Dorsolateral prefrontal cortex (tissue), 120 donors: ENCODE measurements at regions of chr9 and their contacts with region 1.

Region 1: DNA sequence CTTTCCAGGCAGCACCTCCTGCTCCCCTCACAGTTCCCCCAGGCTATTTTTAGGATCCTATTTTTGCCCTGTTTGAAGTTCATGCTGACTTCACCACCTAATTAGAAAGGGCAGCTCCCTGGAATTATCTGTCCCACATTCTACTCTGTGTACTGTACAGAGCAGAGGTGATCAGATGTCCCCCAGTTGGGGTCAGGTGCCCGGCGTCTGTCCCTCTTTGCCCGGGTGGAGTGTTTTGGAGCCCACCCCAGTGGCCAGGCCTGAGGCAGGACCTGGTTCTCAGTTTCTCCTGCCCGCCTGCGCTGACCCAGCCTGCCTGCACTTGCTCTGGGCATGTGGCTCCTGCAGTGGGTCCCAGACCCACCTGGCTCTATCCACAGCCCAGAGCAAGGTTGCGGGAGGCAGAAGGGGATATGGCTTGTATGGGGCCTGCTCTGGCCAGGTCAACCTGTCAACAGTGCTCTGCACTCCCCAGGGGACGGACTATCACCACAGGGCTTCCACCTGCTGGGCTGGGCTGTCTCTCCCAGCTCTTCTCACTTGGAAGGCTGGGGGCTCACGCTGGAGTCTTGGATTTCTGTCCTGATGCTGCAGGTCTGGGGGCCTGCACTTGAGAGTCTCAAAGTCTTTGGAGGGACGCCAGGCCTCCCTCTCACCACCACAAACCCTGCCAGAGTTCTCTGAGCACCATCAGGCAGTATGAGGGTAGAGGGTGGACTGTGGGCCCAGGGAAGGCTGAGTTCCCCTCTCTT is 268.3 kb downstream of the GADD45G start:
- DNase-seq: peak in 5 of 10 donors; percentile 7 to 24 (median 16)
- H3K4me3 ChIP-seq: no peak overlapping the region
- H3K27ac ChIP-seq: no peak overlapping the region
- H3K27me3 ChIP-seq: no peaks in the 10 kb centered on the region
- CTCF ChIP-seq: no peak

Region 2: GRCh38 chr9:89730715-89731114 is 142.4 kb before region 1 on chr9:
- intact Hi-C with region 1: no loop called
- DNase-seq: no peak
- H3K4me3 ChIP-seq: no peak overlapping the region
- H3K27ac ChIP-seq: no peak overlapping the region
- H3K27me3 ChIP-seq: no peaks in the 10 kb centered on the region
- CTCF ChIP-seq: no peak

Region 3: GRCh38 chr9:89825669-89826068 is 47.5 kb before region 1 on chr9:
- intact Hi-C with region 1: loop called in 1 of 2 experiments (anchors 1 kb)
- DNase-seq: no peak
- H3K4me3 ChIP-seq: no peak overlapping the region
- H3K27ac ChIP-seq: no peak overlapping the region
- H3K27me3 ChIP-seq: no peaks in the 10 kb centered on the region
- CTCF ChIP-seq: no peak